Activated T-helper 2 cell treated with anti-CD3 and anti-CD28 coated beads, Interferon-gamma antibody, Interleukin-2, Interleukin-4, amounts not matched to agents 10 μg/mL and 5 μg/mL and 100 μg/mL, durations not matched to agents 14 hours and 24 hours and 36 hours (primary cell): ENCODE measurements at regions of chr4 and their contacts with region 1.

Region 1: GRCh38 chr4:22607382-22607781 is 85.4 kb upstream of the GBA3 start:
- DNase-seq: peak; percentile 53
- H3K4me3 Mint-ChIP-seq: no peak overlapping the region
- H3K27ac Mint-ChIP-seq: no peak overlapping the region
- H3K4me1 Mint-ChIP-seq: peaks cover 42% of the 10 kb centered on the region
- H3K27me3 Mint-ChIP-seq: peaks cover 2% of the 10 kb centered on the region

Region 2: DNA sequence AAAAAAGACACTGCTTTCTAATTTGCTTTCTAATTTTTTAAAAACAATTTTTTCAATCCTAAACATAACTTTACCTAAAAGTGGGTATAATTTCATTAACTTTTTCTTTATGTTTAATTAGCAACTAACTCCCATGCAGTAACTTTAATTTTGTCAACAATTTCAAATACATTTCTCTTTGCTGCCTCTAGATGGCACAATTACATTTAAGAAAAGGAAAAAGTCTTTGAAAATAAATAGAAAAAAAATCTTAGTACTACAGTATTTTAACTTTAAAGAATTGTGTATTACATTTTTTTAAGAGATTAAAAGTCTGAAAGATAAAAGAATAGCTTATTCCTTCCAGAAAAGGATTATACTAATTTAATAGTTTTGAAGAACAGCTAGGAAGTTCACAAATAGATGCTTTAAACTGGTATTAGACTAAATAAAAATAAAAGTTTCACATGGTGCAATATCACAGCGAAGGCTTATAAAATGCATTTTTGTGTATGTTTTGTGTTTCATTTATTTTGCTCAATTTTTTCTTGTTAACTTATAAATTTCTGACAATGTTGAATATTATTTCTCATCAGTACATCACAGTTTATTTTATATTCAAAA is 196.6 kb before region 1 on chr4:
- intact Hi-C with region 1: loop called (anchors 1 kb)
- DNase-seq: no peak
- H3K4me3 Mint-ChIP-seq: no peak overlapping the region
- H3K27ac Mint-ChIP-seq: no peak overlapping the region
- H3K4me1 Mint-ChIP-seq: peaks cover 17% of the 10 kb centered on the region
- H3K27me3 Mint-ChIP-seq: no peaks in the 10 kb centered on the region

Region 3: DNA sequence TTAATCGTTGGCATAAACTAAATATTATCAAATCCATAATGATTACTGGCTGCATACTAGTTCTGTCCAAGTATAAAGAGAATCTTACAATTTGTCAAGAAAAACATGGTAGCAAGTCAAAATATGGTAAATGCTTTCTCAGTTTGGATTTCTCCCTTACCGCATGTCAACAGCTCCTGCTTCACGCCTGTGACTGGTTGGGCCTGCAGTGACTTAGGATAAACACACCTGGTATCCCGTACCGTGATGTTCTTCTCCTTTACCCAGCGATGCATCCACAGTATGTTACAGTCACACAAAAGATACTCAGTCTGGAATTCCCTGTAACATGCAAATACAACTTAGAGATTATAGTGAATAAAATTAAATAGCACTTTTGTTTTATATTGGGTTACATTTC is 162.6 kb before region 1 on chr4:
- intact Hi-C with region 1: loop called (anchors 1 kb)
- DNase-seq: no peak
- H3K4me3 Mint-ChIP-seq: peak overlapping the region; percentile 79
- H3K27ac Mint-ChIP-seq: peak overlapping the region; percentile 94
- H3K4me1 Mint-ChIP-seq: peaks cover 48% of the 10 kb centered on the region
- H3K27me3 Mint-ChIP-seq: no peaks in the 10 kb centered on the region

Region 4: GRCh38 chr4:22515145-22515887 is 92.1 kb before region 1 on chr4:
- intact Hi-C with region 1: loop called (anchors 1 kb)
- DNase-seq: peak; percentile 46
- H3K4me3 Mint-ChIP-seq: peak overlapping the region; percentile 100
- H3K27ac Mint-ChIP-seq: peak overlapping the region; percentile 98
- H3K4me1 Mint-ChIP-seq: peaks cover 25% of the 10 kb centered on the region
- H3K27me3 Mint-ChIP-seq: no peaks in the 10 kb centered on the region

Region 5: DNA sequence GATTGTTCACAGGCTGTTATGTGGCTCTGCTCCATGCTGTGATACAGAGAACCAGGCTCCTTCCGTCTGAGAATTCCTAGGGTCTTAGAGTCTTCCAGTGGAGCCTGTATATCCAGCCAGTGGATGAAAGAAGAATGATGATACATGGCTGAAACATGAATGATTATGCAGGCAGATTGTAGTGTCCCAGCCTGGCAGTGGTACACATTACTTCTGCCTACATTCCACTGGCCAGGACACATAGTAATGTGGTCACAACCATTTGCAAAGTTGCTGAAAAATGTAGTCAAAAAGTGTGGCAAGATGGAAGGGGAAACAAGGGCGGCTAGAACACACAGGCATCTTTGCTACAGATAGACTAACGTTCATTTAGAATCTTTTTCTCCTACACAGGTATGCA is 80.9 kb after region 1 on chr4:
- intact Hi-C with region 1: loop called (anchors 5 kb)
- DNase-seq: no peak
- H3K4me3 Mint-ChIP-seq: no peak overlapping the region
- H3K27ac Mint-ChIP-seq: no peak overlapping the region
- H3K4me1 Mint-ChIP-seq: peaks cover 9% of the 10 kb centered on the region
- H3K27me3 Mint-ChIP-seq: peaks cover 2% of the 10 kb centered on the region